Head of caudate nucleus (tissue), 42 donors: ENCODE measurements at regions of chr11 and their contacts with region 1.

Region 1: DNA sequence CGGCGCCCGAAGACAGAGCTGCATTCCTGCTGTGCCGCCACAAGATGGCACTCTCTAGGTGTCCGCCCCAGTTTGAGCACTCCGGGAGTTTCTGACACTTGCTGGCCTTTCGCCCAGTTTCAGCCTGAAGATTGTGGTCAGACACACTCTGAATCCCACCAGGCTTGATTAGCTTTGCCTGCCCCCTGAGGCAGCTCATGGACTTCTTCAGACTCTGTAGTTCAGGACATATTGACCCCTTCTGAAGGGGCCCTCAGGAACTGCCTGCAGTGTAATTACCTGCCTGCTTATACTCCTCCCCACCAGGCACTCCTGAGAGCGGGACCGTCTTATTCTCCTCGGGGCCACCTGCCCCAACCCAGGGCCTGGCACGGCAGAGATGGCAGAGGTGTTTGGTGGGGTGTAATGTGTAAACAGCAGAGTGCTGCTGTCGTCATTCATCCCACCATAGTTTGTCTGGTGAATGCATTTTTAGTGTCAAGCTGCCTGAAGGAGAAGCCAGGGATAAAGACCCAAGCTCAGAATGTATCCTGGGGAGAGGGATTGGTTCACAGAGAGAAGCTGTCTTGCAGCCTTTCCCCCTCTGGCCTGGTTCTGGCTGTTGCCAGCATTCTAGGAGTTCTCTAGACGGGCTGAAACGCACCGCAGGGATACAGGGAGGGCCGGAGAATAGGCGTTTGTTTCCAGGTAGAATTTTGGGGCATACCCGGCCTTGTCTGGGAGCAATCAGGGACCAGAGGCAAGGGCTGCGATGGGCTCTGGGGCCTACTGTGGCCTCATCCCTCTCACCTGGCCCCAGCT is 46.4 kb downstream of the EIF3F start:
- DNase-seq: peak; percentile 47 to 87 (median 76)

Region 2: DNA sequence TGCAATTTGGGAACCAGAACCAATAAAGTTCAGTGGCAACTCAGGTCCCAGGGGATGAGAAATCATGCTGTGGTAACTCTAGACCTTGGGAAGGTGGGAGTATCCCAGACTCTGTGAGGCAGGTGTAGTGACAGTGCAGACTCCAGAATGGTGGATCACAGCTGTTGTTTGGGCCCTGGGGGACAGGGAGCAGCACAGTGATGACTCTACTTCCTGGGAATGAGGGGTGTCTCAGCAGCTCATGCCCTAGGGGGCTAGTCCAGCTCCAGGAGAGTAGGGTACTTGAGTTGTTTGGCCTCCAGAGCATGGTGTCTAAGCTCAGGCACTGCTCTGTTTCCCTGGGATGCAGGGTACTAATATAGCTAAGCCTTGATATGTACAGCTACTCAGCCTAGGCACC is 88.2 kb before region 1 on chr11:
- intact Hi-C with region 1: no loop called
- DNase-seq: no peak

Region 3: GRCh38 chr11:8092587-8093424 is 59.3 kb after region 1 on chr11:
- intact Hi-C with region 1: loop called (anchors 5 kb)
- DNase-seq: peak in 37 of 42 donors; percentile 38 to 87 (median 57)

Region 4: GRCh38 chr11:8234425-8234821 is 200.9 kb after region 1 on chr11:
- intact Hi-C with region 1: no loop called
- DNase-seq: peak in 1 of 42 donors; percentile 22